Heart right ventricle (tissue), 16 donors: ENCODE measurements at regions of chr1 and their contacts with region 1.

Region 1: DNA sequence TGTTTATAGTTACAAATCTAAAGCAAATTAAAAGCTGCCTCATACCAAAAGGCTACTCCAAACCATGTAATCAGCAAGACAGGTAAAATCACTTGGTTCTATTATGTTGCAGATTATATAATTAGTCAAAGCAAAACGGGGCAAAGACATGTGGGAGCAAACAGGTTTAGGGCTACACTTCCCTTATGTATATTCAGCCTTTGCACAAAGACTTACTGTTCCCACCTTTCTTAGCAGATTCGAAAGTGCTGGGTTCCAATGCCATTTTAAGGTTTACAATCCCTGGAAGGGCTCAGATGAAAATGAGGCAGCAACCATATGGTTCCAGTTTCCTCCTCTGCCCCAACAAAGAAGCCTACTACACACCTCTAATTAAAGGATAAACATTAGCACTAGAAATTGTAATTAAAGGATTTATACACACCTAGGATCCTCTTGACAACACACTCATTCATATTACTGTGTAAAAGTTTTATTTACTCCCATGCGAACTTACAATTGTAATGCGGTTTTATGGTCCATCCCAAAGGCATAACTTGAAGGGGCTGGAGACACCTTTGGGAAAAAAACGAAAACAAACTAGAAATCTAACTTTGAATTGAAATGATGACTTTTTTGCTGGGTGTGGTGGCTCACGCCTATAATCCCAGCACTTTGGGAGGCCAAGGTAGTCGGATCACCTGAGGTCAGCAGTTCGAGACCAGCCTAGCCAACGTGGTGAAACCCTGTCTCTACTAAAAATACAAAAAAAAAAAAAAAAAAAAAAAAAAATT is 117.3 kb upstream of the PKN2 start:
- DNase-seq: no peak
- ATAC-seq: no peak
- H3K4me3 ChIP-seq: no peak overlapping the region
- H3K27ac ChIP-seq: no peak overlapping the region
- H3K4me1 ChIP-seq: no peaks in the 10 kb centered on the region
- H3K27me3 ChIP-seq: no peaks in the 10 kb centered on the region
- CTCF ChIP-seq: no peak

Region 2: DNA sequence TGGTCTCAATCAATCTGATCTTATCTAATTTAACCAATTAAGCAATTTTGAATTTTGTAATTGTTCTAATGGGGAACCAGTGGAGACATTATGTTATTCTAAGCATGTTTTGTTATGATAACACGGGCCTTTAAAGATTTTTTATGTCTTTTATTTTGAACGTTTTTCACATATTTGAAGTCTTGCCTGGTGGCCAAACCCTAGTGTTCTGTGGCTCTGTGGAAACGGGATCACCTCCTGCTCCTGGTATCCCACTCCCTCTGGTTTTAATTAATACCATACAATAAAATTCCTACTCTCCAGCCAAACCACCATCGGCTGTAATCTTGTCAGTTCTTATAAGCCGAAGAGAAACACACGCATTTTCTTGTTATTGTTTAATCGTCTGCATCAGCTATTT is 1261.0 kb before region 1 on chr1:
- intact Hi-C with region 1: loop called in 1 of 10 experiments (anchors 10 kb)
- DNase-seq: no peak
- ATAC-seq: no peak
- H3K4me3 ChIP-seq: no peak overlapping the region
- H3K27ac ChIP-seq: no peak overlapping the region
- H3K4me1 ChIP-seq: no peaks in the 10 kb centered on the region
- H3K27me3 ChIP-seq: no peaks in the 10 kb centered on the region
- CTCF ChIP-seq: no peak